Activated CD8-positive, alpha-beta memory T cell treated with anti-CD3 and anti-CD28 coated beads, Interleukin-2, amount 10 ng/mL, durations not matched to agents 7 days and 5 days (primary cell): ENCODE measurements at regions of chr15 and their contacts with region 1.

Region 1: GRCh38 chr15:44286814-44287452 is 1.6 kb upstream of the GOLM2 start:
- DNase-seq: no peak
- ATAC-seq: no peak
- H3K4me3 Mint-ChIP-seq: peak overlapping the region; percentile 95
- H3K27ac Mint-ChIP-seq: peak overlapping the region; percentile 99
- H3K4me1 Mint-ChIP-seq: peaks cover 37% of the 10 kb centered on the region
- H3K27me3 Mint-ChIP-seq: peaks cover 5% of the 10 kb centered on the region

Region 2: GRCh38 chr15:44231842-44232241 is 55.1 kb before region 1 on chr15:
- CTCF ChIA-PET with region 1: no interaction called
- DNase-seq: no peak
- ATAC-seq: no peak
- H3K4me3 Mint-ChIP-seq: no peak overlapping the region
- H3K27ac Mint-ChIP-seq: no peak overlapping the region
- H3K4me1 Mint-ChIP-seq: no peaks in the 10 kb centered on the region
- H3K27me3 Mint-ChIP-seq: peaks cover 3% of the 10 kb centered on the region

Region 3: GRCh38 chr15:44308415-44308814 is 21.5 kb after region 1 on chr15:
- CTCF ChIA-PET with region 1: interaction called, 10 read pairs
- DNase-seq: peak; percentile 48
- ATAC-seq: peak; percentile 86
- H3K4me3 Mint-ChIP-seq: peak overlapping the region; percentile 12
- H3K27ac Mint-ChIP-seq: peak overlapping the region; percentile 87
- H3K4me1 Mint-ChIP-seq: peaks cover 30% of the 10 kb centered on the region
- H3K27me3 Mint-ChIP-seq: no peaks in the 10 kb centered on the region

Region 4: GRCh38 chr15:44426975-44427755 is 140.2 kb after region 1 on chr15 and contains the start of gene CTDSPL2:
- CTCF ChIA-PET with region 1: interaction called, 21 read pairs
- DNase-seq: peak; percentile 96
- ATAC-seq: peak; percentile 98
- H3K4me3 Mint-ChIP-seq: peak within 1 kb of the TSS; percentile 93
- H3K27ac Mint-ChIP-seq: peak within 1 kb of the TSS; percentile 99
- H3K4me1 Mint-ChIP-seq: peaks cover 36% of the 10 kb centered on the region
- H3K27me3 Mint-ChIP-seq: no peaks in the 10 kb centered on the region
- total RNA-seq, gene CTDSPL2: 65.9 to 75.8 TPM

Region 5: GRCh38 chr15:44501768-44502366 is 214.9 kb after region 1 on chr15:
- CTCF ChIA-PET with region 1: interaction called, 14 read pairs
- DNase-seq: no peak
- ATAC-seq: peak; percentile 71
- H3K4me3 Mint-ChIP-seq: no peak overlapping the region
- H3K27ac Mint-ChIP-seq: no peak overlapping the region
- H3K4me1 Mint-ChIP-seq: peaks cover 23% of the 10 kb centered on the region
- H3K27me3 Mint-ChIP-seq: no peaks in the 10 kb centered on the region